Heart left ventricle (tissue), 16 donors: ENCODE measurements at regions of chr21 and their contacts with region 1.

Region 1: GRCh38 chr21:14722841-14723483 is 176.8 kb upstream of the SAMSN1 start:
- DNase-seq: no peak
- ATAC-seq: no peak
- H3K4me3 ChIP-seq: no peak overlapping the region
- H3K27ac ChIP-seq: no peak overlapping the region
- H3K4me1 ChIP-seq: no peaks in the 10 kb centered on the region
- H3K27me3 ChIP-seq: no peaks in the 10 kb centered on the region
- CTCF ChIP-seq: no peak
- POLR2A ChIP-seq: no peak

Region 2: GRCh38 chr21:14448784-14449183 is 274.2 kb before region 1 on chr21:
- intact Hi-C with region 1: loop called in 1 of 10 experiments (anchors 10 kb)
- DNase-seq: no peak
- ATAC-seq: no peak
- H3K4me3 ChIP-seq: no peak overlapping the region
- H3K27ac ChIP-seq: no peak overlapping the region
- H3K4me1 ChIP-seq: no peaks in the 10 kb centered on the region
- H3K27me3 ChIP-seq: no peaks in the 10 kb centered on the region
- CTCF ChIP-seq: no peak
- POLR2A ChIP-seq: no peak

Region 3: DNA sequence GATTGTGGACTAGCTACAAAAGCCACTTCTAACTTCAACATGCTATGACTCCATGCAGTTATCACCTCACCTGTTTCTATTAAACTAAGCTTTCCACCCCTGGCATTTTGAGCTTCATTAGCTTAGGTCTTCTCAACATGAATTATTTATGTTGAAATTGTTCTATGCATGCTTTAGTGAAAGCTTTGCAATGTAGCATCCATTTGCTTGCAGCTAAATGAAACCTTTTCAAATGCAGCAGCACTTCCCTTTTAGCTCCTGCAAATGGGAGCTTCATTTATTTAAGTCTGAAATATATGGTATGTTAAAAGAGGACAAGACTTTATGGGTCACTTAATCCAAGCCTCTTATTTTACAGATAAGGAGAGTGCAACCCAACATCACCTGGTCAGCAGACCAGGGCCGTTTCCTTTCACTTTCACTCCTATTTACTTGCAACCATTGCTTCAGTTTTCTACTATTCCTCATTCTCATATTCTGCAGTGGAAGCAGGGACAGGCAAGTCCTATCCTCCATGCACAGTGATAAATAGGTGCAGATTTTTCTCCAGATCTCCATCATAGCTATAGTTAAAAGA is 120.5 kb before region 1 on chr21:
- intact Hi-C with region 1: no loop called
- DNase-seq: no peak
- ATAC-seq: no peak
- H3K4me3 ChIP-seq: peak overlapping the region in 1 of 12 donors; percentile 15
- H3K27ac ChIP-seq: peak overlapping the region in 1 of 12 donors; percentile 9
- H3K4me1 ChIP-seq: peaks cover 0 to 12% (median 0%) of the 10 kb centered on the region in 12 donors
- H3K27me3 ChIP-seq: no peaks in the 10 kb centered on the region
- CTCF ChIP-seq: no peak
- POLR2A ChIP-seq: no peak

Region 4: DNA sequence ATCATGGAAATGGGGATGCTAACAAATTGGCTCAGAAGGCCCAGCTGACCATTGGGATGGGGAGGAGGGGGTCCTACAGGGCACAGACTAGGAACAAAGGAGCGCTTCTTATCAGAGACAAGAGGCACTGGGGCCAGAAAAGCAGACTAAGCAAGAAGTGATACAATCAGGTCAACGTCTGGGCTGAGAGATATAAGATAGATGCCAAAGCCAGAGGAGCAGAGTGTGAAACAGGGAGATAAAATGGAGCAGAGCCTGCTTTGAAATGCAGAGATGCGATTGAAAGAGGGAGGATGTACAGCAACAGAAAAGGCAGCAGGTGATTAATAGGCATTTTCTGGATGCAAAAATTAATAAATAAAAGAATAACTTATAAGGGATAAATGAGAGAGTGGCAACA is 49.3 kb before region 1 on chr21:
- intact Hi-C with region 1: loop called in 1 of 10 experiments (anchors 10 kb)
- DNase-seq: no peak
- ATAC-seq: no peak
- H3K4me3 ChIP-seq: no peak overlapping the region
- H3K27ac ChIP-seq: no peak overlapping the region
- H3K4me1 ChIP-seq: peaks cover 0 to 22% (median 0%) of the 10 kb centered on the region in 12 donors
- H3K27me3 ChIP-seq: no peaks in the 10 kb centered on the region
- CTCF ChIP-seq: no peak
- POLR2A ChIP-seq: no peak